Dendritic cell treated with granulocyte-macrophage colony-stimulating factor and Interleukin-4, amounts not matched to agents 40 ng/mL and 50 ng/mL, for 4 days (primary cell): ENCODE measurements at regions of chr7 and their contacts with region 1.

Region 1: GRCh38 chr7:39746103-39746819 is 122.9 kb downstream of the RALA start:
- H3K4me3 Mint-ChIP-seq: no peak overlapping the region
- H3K27ac Mint-ChIP-seq: no peak overlapping the region
- H3K4me1 Mint-ChIP-seq: peaks cover 9% of the 10 kb centered on the region
- H3K27me3 Mint-ChIP-seq: no peaks in the 10 kb centered on the region

Region 2: DNA sequence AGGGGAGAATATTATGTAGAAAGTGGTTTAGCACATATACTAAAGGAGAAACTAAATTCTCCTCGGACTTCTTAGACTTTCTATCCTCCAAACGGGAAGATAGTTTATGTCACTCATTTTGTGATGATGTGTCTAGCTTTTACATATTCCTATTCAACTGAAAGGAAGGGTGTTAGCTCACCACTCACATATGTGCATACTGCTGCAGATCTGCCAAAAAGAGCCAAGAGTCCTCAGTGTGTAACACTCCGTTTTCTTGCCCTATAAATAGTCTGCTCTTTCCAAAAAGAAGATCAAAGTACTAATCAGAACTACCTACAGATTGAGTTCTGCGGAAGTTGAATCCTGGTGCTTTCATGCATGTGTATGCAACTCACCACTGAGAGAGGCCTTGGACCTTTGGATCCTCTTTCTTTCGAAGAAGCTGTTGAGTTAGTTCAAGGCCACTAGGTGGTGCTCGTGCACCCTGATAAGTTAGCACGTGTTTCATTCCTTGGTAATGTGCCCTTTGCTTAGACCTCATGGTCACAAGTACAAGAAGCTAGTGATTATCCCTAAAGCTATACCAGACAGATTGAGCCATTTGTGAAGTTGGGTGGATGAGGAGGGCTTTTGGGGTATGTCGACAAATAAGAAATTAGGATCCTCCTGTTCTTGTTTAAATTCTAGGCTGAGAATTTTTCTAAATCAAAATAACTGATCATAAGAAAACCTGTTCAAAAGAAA is 165.9 kb before region 1 on chr7:
- intact Hi-C with region 1: loop called (anchors 1 kb)
- H3K4me3 Mint-ChIP-seq: no peak overlapping the region
- H3K27ac Mint-ChIP-seq: no peak overlapping the region
- H3K4me1 Mint-ChIP-seq: no peaks in the 10 kb centered on the region
- H3K27me3 Mint-ChIP-seq: no peaks in the 10 kb centered on the region

Region 3: DNA sequence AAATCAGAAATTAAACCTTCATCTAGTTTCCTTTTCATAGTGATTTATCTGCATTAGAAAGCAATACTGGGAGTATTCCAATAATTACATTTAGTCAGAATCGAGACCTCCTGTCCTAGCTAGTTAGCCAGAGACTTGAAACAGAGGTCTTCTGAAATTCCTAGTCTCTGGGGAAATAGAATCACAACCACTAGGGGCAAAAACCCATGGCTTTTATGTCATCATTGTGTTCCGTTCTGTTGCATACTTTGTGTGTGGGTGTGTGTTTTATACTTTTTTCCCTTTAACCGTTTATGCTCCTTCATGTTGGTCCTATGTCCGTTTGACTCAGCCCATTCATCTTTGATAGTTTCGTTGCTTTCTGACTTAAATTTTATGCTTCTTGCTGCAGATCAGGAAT is 43.1 kb before region 1 on chr7:
- intact Hi-C with region 1: loop called (anchors 5 kb)
- H3K4me3 Mint-ChIP-seq: no peak overlapping the region
- H3K27ac Mint-ChIP-seq: no peak overlapping the region
- H3K4me1 Mint-ChIP-seq: peaks cover 29% of the 10 kb centered on the region
- H3K27me3 Mint-ChIP-seq: no peaks in the 10 kb centered on the region